ENCODE measurements at regions of chr6 and their contacts with region 1.

Region 1: GRCh38 chr6:133916650-133917151 is 27.8 kb downstream of the TCF21 start:
- DNase-seq: peak; percentile 96 to 99
- H3K4me3 ChIP-seq: peak overlapping the region in 3 of 4 experiments; percentile 4 to 46 (median 12); a peak in 4 of 8 replicates
- H3K27ac ChIP-seq: no peak overlapping the region; the same call in 1 of the 2 replicates
- H3K4me1 ChIP-seq: peaks cover 0 to 7% (median 3%) of the 10 kb centered on the region in 4 experiments; a peak in 6 of 7 replicates
- H3K27me3 ChIP-seq: no peaks in the 10 kb centered on the region
- CTCF ChIP-seq: peak; percentile 86 to 97 (median 87)
- EP300 ChIP-seq: no peak
- POLR2A ChIP-seq: no peak
- RAD21 ChIP-seq: peak; percentile 96 to 98

Region 2: DNA sequence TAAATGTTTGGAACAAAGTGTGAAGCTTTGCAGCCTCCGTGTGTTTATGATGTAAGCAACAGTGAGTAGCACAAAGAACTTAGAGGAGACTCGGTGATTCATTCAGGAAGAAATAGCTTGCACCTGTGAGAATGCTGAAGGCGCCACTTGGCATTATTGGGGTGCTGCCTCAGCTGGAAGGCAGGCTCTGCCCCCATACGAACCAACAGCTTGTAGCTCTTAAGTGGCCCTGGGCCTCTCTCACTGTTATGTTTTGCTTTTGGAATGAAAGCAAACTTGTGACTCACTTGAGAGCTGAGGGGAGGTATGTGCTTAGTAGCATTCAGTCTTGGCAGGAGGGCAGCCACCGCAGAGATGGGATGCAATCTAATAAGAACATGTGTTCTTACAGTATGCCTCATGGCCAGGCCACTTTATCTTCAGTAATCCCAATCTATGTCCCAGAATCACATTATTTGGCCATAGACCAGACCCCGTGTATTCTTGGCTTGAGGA is 364.8 kb before region 1 on chr6:
- CTCF ChIA-PET with region 1: interaction called, 16 read pairs
- POLR2A ChIA-PET with region 1: no interaction called
- DNase-seq: no peak
- H3K4me3 ChIP-seq: no peak overlapping the region
- H3K27ac ChIP-seq: no peak overlapping the region
- H3K4me1 ChIP-seq: peaks cover 7 to 17% (median 12%) of the 10 kb centered on the region in 4 experiments
- H3K27me3 ChIP-seq: no peaks in the 10 kb centered on the region
- CTCF ChIP-seq: no peak
- EP300 ChIP-seq: no peak
- POLR2A ChIP-seq: no peak
- RAD21 ChIP-seq: no peak

Region 3: DNA sequence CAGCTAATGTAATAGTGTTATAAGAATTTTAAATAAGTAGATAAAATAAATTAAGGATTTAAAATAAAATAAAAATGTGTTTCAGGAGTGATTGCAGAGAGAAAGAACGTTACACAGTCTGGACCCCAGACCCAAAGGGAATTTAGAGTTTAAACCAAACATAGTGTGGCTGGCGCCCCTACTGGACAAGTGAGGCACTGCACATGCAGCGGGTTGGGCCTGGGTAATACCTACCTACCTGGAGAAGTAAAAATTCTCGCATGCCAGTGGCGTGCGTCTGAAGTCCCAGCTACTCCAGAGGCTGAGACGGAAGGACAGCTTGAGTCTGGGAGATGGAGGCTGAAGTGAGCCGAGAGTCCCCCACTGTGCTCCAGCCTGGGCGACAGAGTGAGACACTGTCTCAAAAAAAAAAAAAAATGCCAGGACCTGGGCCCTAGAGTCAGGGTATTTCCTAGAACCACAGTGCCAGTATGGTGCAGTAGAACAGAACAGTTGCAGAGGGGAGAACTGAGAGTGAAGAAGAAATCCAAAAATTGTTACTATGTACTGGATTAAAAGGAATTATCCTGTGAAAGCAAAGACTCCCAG is 99.1 kb before region 1 on chr6:
- CTCF ChIA-PET with region 1: interaction called, 21 read pairs
- POLR2A ChIA-PET with region 1: no interaction called
- DNase-seq: peak; percentile 61 to 96
- H3K4me3 ChIP-seq: no peak overlapping the region
- H3K27ac ChIP-seq: no peak overlapping the region
- H3K4me1 ChIP-seq: peaks cover 0 to 2% (median 0%) of the 10 kb centered on the region in 4 experiments; a peak in 1 of 7 replicates
- H3K27me3 ChIP-seq: no peaks in the 10 kb centered on the region
- CTCF ChIP-seq: peak; percentile 73 to 96 (median 91)
- EP300 ChIP-seq: no peak
- POLR2A ChIP-seq: no peak
- RAD21 ChIP-seq: peak; percentile 72 to 74

Region 4: GRCh38 chr6:133854364-133855275 is 62.1 kb before region 1 on chr6:
- CTCF ChIA-PET with region 1: interaction called, 11 read pairs
- POLR2A ChIA-PET with region 1: no interaction called
- DNase-seq: peak in 1 of 2 experiments; percentile 74
- H3K4me3 ChIP-seq: peak overlapping the region; percentile 62 to 71 (median 65)
- H3K27ac ChIP-seq: no peak overlapping the region
- H3K4me1 ChIP-seq: peaks cover 0 to 9% (median 2%) of the 10 kb centered on the region in 4 experiments; a peak in 4 of 7 replicates
- H3K27me3 ChIP-seq: peaks cover 2 to 34% (median 23%) of the 10 kb centered on the region in 4 experiments
- CTCF ChIP-seq: no peak
- EP300 ChIP-seq: no peak
- POLR2A ChIP-seq: no peak
- RAD21 ChIP-seq: no peak; a peak in 1 of 4 replicates

Region 5: DNA sequence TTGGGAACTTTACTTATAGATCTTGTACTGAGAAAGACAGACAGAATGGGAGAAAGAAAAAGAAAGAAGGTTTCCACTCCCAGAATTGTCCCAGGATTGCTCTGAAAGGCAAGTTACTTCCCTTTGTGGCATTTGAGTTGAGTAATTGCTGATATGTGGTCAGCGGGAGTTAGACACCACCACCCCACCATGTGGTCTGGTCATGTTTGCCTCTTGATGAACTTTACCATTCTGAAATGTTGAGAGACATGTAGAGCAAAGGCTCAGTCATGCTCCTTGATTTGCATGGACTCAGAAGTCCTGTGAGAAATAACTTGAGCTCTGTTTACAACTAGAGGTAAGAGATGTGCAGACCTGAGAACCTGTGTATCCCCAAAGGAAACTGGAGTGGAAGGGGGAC is 10.7 kb before region 1 on chr6:
- CTCF ChIA-PET with region 1: interaction called, 11 read pairs
- POLR2A ChIA-PET with region 1: no interaction called
- DNase-seq: no peak
- H3K4me3 ChIP-seq: no peak overlapping the region
- H3K27ac ChIP-seq: no peak overlapping the region
- H3K4me1 ChIP-seq: no peaks in the 10 kb centered on the region
- H3K27me3 ChIP-seq: no peaks in the 10 kb centered on the region
- CTCF ChIP-seq: no peak
- EP300 ChIP-seq: no peak
- POLR2A ChIP-seq: no peak
- RAD21 ChIP-seq: no peak

Region 6: GRCh38 chr6:134416418-134417154 is 499.9 kb after region 1 on chr6:
- CTCF ChIA-PET with region 1: no interaction called
- POLR2A ChIA-PET with region 1: no interaction called
- DNase-seq: no peak
- H3K4me3 ChIP-seq: no peak overlapping the region
- H3K27ac ChIP-seq: no peak overlapping the region
- H3K4me1 ChIP-seq: no peaks in the 10 kb centered on the region
- H3K27me3 ChIP-seq: no peaks in the 10 kb centered on the region
- CTCF ChIP-seq: no peak
- EP300 ChIP-seq: no peak
- POLR2A ChIP-seq: no peak
- RAD21 ChIP-seq: no peak